ENCODE measurements at regions of chr12 and their contacts with region 1.

Region 1: DNA sequence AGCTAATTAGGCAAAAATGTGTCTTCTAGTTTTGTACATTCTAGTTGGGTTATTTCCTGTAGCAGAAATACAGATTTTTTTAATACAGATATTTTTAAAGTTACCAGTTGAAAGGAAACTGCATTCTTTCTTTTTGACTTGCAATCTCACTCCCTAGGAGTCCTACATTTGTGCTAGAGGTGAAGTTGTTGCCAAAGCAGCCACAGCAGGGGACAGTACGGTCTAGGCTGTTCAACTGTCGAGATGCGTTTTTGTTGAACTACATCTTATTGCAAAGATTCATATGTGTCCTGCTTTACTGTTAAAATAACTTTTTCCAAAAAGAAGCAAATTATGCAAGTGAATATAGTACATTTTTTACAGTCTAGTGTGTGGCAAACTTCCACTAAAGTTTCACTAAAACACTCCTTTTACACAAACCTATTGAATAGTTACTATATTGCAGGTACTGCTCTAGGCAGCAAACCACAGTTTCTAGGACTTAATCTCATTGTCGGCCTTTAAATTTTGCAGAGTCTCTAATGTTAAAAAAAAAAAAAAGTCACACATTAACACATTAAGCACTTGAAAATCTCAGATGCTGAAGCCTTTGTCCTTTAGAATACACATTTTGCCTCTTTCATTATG is 30.2 kb upstream of the SRGAP1 start:
- DNase-seq: no peak
- H3K4me3 Mint-ChIP-seq: no peak overlapping the region
- H3K27ac Mint-ChIP-seq: peak overlapping the region; percentile 82
- H3K4me1 Mint-ChIP-seq: peaks cover 34% of the 10 kb centered on the region
- H3K27me3 Mint-ChIP-seq: peaks cover 3% of the 10 kb centered on the region

Region 2: GRCh38 chr12:63766498-63766897 is 47.8 kb before region 1 on chr12:
- intact Hi-C with region 1: no loop called
- DNase-seq: no peak
- H3K4me3 Mint-ChIP-seq: no peak overlapping the region
- H3K27ac Mint-ChIP-seq: no peak overlapping the region
- H3K4me1 Mint-ChIP-seq: no peaks in the 10 kb centered on the region
- H3K27me3 Mint-ChIP-seq: peaks cover 12% of the 10 kb centered on the region

Region 3: GRCh38 chr12:63843721-63844390 is 29.6 kb after region 1 on chr12:
- intact Hi-C with region 1: no loop called
- DNase-seq: peak; percentile 68
- H3K4me3 Mint-ChIP-seq: peak overlapping the region; percentile 66
- H3K27ac Mint-ChIP-seq: no peak overlapping the region
- H3K4me1 Mint-ChIP-seq: peaks cover 9% of the 10 kb centered on the region
- H3K27me3 Mint-ChIP-seq: peaks cover 47% of the 10 kb centered on the region

Region 4: GRCh38 chr12:64222009-64222765 is 407.9 kb after region 1 on chr12 and contains the start of gene KICS2:
- intact Hi-C with region 1: loop called (anchors 10 kb)
- DNase-seq: peak; percentile 88
- H3K4me3 Mint-ChIP-seq: peak within 1 kb of the TSS; percentile 99
- H3K27ac Mint-ChIP-seq: peak within 1 kb of the TSS; percentile 100
- H3K4me1 Mint-ChIP-seq: peaks cover 39% of the 10 kb centered on the region
- H3K27me3 Mint-ChIP-seq: peaks cover 18% of the 10 kb centered on the region
- total RNA-seq, gene KICS2: 15.3 and 16.6 TPM in 2 replicates

Region 5: GRCh38 chr12:65022960-65023359 is 1208.7 kb after region 1 on chr12:
- intact Hi-C with region 1: no loop called
- DNase-seq: no peak
- H3K4me3 Mint-ChIP-seq: no peak overlapping the region
- H3K27ac Mint-ChIP-seq: no peak overlapping the region
- H3K4me1 Mint-ChIP-seq: no peaks in the 10 kb centered on the region
- H3K27me3 Mint-ChIP-seq: no peaks in the 10 kb centered on the region